Ascending aorta (tissue), 2 donors: ENCODE measurements at regions of chr9 and their contacts with region 1.

Region 1: GRCh38 chr9:96854073-96854876 is at the start of gene ZNF782:
- DNase-seq: peak; percentile 66 to 96
- H3K4me3 ChIP-seq: peak within 1 kb of the TSS; percentile 87 to 97
- H3K27ac ChIP-seq: peak within 1 kb of the TSS; percentile 66 to 84
- H3K4me1 ChIP-seq: peaks cover 7 to 15% of the 10 kb centered on the region in 2 donors
- H3K27me3 ChIP-seq: no peaks in the 10 kb centered on the region
- CTCF ChIP-seq: no peak
- total RNA-seq, gene ZNF782: 8.6 TPM

Region 2: DNA sequence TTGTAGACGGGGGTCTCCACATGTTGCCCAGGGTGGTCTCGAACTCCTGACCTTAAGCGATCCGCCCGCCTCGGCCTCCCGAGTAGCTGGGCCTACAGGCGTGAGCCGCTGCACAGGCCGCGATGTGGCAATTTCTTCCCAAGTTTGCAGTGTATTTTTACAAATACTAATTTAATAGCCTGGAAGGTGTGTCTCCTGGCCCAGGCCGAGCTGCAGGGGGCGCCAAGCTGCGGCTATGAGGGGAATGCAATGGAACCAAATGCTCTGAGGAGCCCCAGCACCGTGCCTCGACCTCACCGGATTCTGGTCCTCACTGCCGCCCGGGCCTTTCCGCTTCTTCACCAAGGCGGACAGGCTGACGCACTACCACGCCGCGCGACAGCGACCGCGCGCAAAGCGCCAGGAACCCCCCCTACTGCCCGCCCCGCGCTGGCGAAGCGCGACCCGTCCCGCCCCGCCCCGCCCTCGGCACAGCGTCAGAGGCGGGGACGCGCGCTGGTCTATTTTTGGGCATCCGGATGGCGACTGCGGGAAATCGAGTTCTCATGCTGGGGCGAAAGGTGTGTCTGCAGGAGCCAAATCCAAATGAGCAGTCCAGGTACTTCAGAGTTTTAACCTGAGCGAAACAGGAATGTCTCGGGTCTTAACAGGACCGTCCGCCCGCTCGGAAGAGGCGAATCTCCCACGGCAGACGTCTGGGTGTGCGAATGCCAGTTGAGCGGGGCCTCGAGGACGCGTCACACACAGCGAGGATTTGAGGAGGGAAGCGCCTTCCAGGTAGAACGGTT is 167.5 kb before region 1 on chr9:
- intact Hi-C with region 1: loop called (anchors 5 kb)
- DNase-seq: peak; percentile 37 to 91
- H3K4me3 ChIP-seq: peak overlapping the region; percentile 62 to 74
- H3K27ac ChIP-seq: peak overlapping the region; percentile 63 to 79
- H3K4me1 ChIP-seq: peaks cover 0 to 5% of the 10 kb centered on the region in 2 donors
- H3K27me3 ChIP-seq: no peaks in the 10 kb centered on the region
- CTCF ChIP-seq: peak; percentile 23 to 52 (median 47)

Region 3: DNA sequence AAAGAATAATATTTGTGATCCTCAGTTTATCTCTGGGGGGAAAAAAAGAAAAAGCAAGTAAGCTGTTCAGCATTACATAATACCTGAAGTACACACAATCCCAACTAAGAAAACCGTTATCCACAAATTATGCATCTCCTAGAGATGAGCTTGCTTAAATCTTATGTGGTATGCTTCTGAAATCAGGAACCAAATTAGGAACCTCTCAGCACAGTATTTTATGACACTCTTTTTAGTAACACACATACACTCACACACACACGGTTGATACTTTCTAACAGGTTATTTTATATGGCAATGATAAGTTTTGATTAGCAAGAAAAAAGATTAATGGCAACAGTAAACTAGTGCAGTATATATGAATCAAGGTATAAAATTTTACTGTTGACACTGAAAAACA is 75.2 kb before region 1 on chr9:
- intact Hi-C with region 1: no loop called
- DNase-seq: no peak
- H3K4me3 ChIP-seq: peak overlapping the region; percentile 73 to 85
- H3K27ac ChIP-seq: no peak overlapping the region
- H3K4me1 ChIP-seq: peaks cover 0 to 4% of the 10 kb centered on the region in 2 donors
- H3K27me3 ChIP-seq: no peaks in the 10 kb centered on the region
- CTCF ChIP-seq: no peak

Region 4: DNA sequence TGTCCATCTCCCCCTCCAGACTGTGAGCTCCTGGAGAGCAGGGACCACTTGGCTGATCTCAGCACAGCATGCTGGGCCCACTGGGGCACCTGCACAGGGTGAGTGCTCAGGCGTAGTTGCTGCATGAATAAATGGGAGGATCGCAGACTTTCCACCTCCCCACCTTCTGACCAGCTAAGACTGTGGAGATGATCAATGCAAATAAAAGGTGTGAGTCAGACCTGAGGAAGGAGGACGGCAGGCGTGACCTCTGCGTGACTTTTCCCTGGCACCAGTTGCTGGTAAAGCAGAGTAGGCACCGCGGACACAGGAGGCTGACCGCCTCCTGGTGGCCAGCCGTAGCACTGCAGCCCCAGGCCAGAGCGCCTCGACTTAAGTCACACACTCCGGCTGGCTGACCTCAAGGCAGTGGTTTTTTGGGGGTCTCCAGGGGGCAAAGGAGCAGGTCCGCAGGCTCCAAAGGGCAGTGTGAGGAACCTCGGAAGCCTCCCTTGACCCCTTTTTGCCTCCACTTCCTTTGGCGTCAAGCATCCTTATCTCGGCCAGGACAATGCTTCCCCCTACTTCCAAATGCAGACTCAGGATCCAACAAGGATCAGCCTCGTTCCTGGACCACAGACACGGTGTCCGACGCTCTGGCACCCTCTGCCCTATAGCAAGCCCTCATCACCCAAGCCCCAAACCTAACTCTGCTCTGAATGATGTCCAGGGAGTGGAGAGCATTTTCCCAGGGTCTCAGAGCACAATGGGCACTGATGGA is 544.9 kb after region 1 on chr9:
- intact Hi-C with region 1: loop called (anchors 2 kb)
- DNase-seq: peak in 1 of 2 donors; percentile 76
- H3K4me3 ChIP-seq: no peak overlapping the region
- H3K27ac ChIP-seq: no peak overlapping the region
- H3K4me1 ChIP-seq: no peaks in the 10 kb centered on the region
- H3K27me3 ChIP-seq: no peaks in the 10 kb centered on the region
- CTCF ChIP-seq: peak; percentile 70 to 89 (median 85)